Transverse colon (tissue), 4 donors: ENCODE measurements at regions of chr17 and their contacts with region 1.

Region 1: DNA sequence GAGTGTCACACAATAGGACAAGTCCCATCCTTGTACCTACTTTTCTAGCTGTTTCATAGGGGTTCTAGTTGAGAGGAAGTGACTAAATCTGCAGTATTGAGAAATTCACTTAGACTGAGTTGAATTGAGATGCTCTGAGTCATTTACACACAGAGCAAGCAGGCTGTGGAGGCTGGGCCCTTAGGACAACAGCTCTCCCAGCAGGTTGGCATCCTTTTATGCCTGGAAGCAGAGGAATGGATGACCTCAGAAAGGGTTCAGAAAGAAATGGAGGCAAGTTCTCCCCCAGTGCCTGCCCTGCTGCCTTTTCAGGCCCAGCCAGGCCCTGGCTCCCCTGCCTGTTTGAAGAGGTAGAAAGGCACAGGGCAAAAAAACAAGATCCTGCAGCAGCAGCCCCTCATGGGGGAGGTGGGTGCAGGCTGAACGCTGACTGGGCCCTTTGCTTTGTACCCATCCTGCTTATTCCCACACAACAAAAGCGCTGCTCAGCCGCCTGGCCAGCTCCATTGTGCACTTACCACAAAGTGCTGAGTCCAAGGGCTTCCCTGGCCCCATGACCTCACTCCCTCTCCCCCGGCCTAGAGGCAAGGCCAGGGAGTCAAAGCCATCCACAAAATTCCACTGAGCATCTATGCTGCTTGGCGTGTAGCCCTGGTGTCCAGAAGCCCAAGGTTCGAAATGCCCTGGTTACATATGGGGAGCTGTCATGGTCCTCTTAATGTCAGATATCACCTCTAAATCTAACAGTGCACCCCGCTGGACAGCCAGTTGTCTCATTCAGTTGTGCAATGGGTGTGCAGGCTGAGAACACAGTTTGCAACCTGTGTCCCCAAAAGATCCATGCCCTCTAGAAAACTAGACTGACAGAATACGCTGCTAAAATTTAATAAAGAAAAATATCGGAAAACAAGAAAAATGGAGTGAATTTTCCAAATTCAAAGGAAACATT is 5.4 kb upstream of the CRYBA1 start:
- DNase-seq: no peak
- H3K4me3 ChIP-seq: no peak overlapping the region
- H3K27ac ChIP-seq: peak overlapping the region in 3 of 4 donors; percentile 6 to 50 (median 31)
- H3K4me1 ChIP-seq: peaks cover 0 to 8% (median 0%) of the 10 kb centered on the region in 4 donors
- H3K27me3 ChIP-seq: no peaks in the 10 kb centered on the region
- CTCF ChIP-seq: no peak
- EP300 ChIP-seq: no peak
- POLR2A ChIP-seq: no peak

Region 2: GRCh38 chr17:29005936-29006511 is 235.3 kb before region 1 on chr17 and contains the start of gene SEZ6:
- in situ Hi-C with region 1: loop called in 1 of 4 experiments (anchors 25 kb)
- intact Hi-C with region 1: no loop called
- DNase-seq: peak; percentile 37
- H3K4me3 ChIP-seq: no peak within 1 kb of the TSS
- H3K27ac ChIP-seq: no peak within 1 kb of the TSS
- H3K4me1 ChIP-seq: peaks cover 0 to 8% (median 1%) of the 10 kb centered on the region in 4 donors
- H3K27me3 ChIP-seq: peaks cover 77% of the 10 kb centered on the region
- CTCF ChIP-seq: peak in 2 of 5 experiments; percentile 10 to 14
- EP300 ChIP-seq: no peak
- POLR2A ChIP-seq: no peak
- total RNA-seq, gene SEZ6: 0.14 TPM in 1 of 4 donors, not detected in the others

Region 3: GRCh38 chr17:29444589-29444988 is 203.3 kb after region 1 on chr17:
- in situ Hi-C with region 1: no loop called
- intact Hi-C with region 1: loop called (anchors 5 kb)
- DNase-seq: no peak
- H3K4me3 ChIP-seq: no peak overlapping the region
- H3K27ac ChIP-seq: no peak overlapping the region
- H3K4me1 ChIP-seq: peaks cover 0 to 33% (median 9%) of the 10 kb centered on the region in 4 donors
- H3K27me3 ChIP-seq: no peaks in the 10 kb centered on the region
- CTCF ChIP-seq: no peak
- EP300 ChIP-seq: no peak
- POLR2A ChIP-seq: no peak